ENCODE measurements at regions of chr1 and their contacts with region 1.

Region 1: GRCh38 chr1:209747580-209748262 is 8.1 kb upstream of the TRAF3IP3 start:
- DNase-seq: peak; percentile 95 to 97
- H3K4me3 ChIP-seq: no peak overlapping the region
- H3K27ac ChIP-seq: no peak overlapping the region
- H3K4me1 ChIP-seq: no peaks in the 10 kb centered on the region; the same call in 1 of the 2 replicates
- H3K27me3 ChIP-seq: no peaks in the 10 kb centered on the region
- CTCF ChIP-seq: peak; percentile 94

Region 2: GRCh38 chr1:209576798-209577197 is 170.9 kb before region 1 on chr1:
- CTCF ChIA-PET with region 1: interaction called, 3 read pairs
- POLR2A ChIA-PET with region 1: no interaction called
- intact Hi-C with region 1: loop called (anchors 1 kb)
- DNase-seq: peak; percentile 52 to 80
- H3K4me3 ChIP-seq: no peak overlapping the region
- H3K27ac ChIP-seq: no peak overlapping the region
- H3K4me1 ChIP-seq: no peaks in the 10 kb centered on the region
- H3K27me3 ChIP-seq: peaks cover 25% of the 10 kb centered on the region; the same call in 1 of the 2 replicates
- CTCF ChIP-seq: peak; percentile 89

Region 3: DNA sequence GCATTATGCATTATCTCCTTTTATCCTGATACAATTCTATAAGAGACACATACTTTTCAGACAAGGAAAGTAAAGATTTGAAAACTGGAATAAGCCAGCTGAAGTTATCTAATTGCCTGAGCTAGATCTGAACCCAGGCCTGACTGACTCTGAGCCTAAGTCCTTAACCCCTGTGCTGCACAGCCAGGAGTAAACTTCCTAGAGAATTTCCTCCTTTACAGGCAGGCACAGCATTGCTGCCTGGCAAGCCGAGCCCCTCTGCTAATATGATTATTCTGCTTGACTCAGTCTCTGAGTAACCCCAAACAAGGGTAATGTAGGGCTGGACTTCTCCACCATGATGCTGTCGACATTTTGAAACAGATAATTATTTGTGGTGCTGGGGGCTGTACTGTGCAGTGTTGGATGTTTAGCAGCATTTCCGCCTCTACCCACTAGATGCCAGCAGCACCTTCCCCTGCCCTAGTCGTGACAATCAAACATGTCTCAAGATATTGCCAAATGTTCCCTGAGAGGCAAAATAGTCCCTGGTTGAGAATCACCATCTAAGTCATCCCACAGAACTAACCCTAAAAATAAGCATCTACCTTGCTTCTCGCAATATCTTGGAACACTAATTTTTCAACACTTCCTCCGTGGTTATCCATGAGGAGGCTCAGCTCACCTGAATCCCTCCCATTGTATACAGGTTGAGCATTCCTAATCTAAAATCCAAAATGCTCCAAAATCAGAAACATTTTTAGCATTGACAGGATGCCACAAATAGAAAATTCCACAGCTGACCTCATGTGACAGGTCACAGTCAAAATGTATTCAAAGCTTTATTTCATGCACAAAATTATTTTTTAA is 145.7 kb before region 1 on chr1:
- CTCF ChIA-PET with region 1: no interaction called
- POLR2A ChIA-PET with region 1: no interaction called
- intact Hi-C with region 1: loop called (anchors 1 kb)
- DNase-seq: peak; percentile 41
- H3K4me3 ChIP-seq: no peak overlapping the region
- H3K27ac ChIP-seq: no peak overlapping the region
- H3K4me1 ChIP-seq: peaks cover 1% of the 10 kb centered on the region; the same call in 1 of the 2 replicates
- H3K27me3 ChIP-seq: no peaks in the 10 kb centered on the region; the same call in 1 of the 2 replicates
- CTCF ChIP-seq: peak; percentile 75

Measured in PC-9 (cell line).